BJ (cell line): ENCODE measurements at regions of chr22 and their contacts with region 1.

Region 1: DNA sequence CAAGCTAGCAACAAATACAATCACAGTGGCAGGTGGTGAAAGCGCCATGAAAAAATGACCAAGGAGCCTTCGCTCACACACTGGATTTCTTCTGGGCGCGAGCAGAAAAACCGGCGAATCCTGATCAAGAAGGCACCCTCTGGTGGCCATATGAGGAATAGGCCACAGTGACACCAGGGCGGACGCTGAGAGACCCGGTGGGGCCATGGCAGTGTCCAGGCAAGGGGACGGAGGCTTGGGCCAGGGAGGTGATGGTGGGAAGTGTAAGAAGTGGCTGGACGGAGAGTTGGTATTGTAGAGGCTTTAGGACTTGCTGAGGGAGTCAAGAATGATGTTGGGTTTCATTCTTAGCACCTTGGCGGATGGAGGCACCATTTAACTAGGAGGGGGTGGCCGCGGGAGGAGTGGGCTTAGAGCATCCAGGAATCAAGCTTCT is 16.9 kb upstream of the RAC2 start:
- DNase-seq: no peak
- H3K4me3 ChIP-seq: no peak overlapping the region
- H3K27me3 ChIP-seq: peaks cover 14% of the 10 kb centered on the region
- CTCF ChIP-seq: peak; percentile 96

Region 2: DNA sequence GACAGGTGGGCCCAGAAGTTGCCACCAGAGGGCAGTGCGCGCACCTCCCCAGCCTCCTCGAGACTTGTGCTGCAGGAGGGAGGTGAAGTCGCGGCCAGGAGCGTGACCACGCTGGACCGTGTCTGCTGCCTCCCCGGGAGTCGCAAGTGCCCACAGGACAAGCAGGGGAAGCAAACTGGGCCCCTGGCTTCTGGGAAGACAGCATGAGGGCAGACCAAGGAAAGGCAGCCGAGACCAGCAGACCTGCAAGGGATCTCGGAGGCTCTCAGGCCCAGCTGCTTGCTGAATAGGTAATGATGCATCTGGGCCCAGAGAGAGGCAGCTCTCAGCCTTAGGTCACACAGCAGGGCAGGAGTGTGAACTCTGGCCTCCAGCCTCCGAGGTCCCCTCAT is 94.2 kb before region 1 on chr22:
- CTCF ChIA-PET with region 1: interaction called, 13 read pairs
- POLR2A ChIA-PET with region 1: no interaction called
- DNase-seq: no peak
- H3K4me3 ChIP-seq: no peak overlapping the region
- H3K27me3 ChIP-seq: peaks cover 8% of the 10 kb centered on the region
- CTCF ChIP-seq: peak; percentile 90

Region 3: DNA sequence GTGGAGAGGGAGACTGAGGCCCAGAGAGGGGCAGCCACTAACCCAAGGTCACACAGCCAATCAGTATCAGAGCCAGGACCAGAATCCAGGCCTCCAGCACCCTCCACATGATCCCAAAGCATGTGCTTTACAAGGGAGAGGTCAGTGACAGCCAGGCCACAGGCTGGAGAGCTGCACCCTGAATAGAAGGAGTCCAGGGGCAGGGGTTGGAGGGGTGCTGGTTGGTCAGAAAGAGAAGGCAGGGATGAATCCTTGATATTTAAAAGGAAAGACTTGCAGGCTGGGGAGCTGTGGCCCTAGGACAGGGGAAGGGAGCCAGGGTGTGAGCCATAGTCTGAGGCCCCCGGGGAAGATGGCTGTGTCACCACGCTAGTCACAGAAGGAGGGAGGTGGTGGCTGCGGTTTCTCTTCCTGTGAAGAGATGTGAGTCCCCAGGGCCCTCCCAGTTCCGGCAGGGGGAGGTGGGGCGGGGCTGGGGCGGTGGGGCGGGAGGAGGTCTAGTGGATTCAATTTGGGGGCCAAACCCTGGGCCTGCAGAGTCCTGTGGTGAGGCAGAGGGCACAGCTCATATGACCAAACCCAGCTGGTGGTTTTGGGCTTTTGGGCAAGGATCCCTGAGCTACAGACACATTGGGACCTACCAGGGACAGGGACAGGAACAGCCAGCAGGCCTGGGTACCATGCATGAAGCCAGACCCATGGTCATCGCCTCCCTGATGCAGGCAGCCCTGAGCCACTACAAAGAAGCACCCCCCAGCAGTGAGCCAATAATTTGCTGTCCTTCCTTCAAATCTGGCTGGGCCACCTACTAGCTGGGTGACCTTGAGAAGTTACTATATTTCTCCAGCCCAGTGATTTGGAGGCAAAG is 30.9 kb before region 1 on chr22:
- CTCF ChIA-PET with region 1: interaction called, 46 read pairs
- POLR2A ChIA-PET with region 1: no interaction called
- DNase-seq: peak; percentile 28
- H3K4me3 ChIP-seq: no peak overlapping the region
- H3K27me3 ChIP-seq: no peaks in the 10 kb centered on the region
- CTCF ChIP-seq: no peak

Region 4: DNA sequence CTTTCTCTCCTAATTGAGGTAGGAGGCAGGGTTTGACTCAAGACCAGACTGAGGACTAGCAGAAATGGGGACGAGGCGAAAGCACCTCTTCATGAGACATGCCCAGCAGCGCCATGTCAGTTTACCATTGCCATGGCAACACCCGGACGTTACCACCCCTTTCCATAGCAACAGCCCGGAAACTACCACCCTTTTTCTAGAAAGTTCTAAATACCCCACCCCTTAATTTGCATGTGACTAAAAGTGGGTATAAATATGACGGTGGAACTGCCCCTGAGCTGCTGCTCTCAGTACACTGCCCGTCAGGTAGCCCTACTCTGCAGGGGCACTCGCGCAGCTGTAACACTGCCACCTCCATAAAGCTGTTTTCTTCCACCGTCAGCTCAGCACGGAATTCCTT is 10.9 kb before region 1 on chr22:
- CTCF ChIA-PET with region 1: interaction called, 83 read pairs
- POLR2A ChIA-PET with region 1: no interaction called
- DNase-seq: no peak
- H3K4me3 ChIP-seq: no peak overlapping the region
- H3K27me3 ChIP-seq: peaks cover 1% of the 10 kb centered on the region
- CTCF ChIP-seq: no peak

Region 5: DNA sequence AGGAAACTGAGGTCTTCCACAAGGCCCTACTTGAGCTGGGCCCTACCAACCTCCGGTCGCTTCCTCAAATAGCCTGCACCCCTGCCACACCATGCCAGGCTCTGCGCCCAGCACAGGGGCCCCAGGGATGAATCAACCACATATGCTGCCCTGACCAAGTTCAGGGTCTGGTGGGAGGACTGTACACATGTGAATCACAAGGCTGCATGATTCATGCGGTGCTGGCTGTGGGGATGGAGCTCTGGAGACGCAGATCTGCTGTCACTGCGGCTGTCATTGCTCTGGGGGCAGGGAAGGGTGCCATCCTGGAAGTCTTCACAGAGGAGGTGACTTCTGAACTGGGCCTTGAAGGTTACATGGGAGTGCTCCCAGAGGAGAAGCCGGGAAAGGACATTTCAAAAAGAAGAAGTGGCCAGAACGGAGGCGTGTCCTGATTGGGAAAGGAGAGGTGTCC is 42.9 kb after region 1 on chr22:
- CTCF ChIA-PET with region 1: interaction called, 14 read pairs
- POLR2A ChIA-PET with region 1: no interaction called
- DNase-seq: peak; percentile 58
- H3K4me3 ChIP-seq: no peak overlapping the region
- H3K27me3 ChIP-seq: no peaks in the 10 kb centered on the region
- CTCF ChIP-seq: no peak

Region 6: DNA sequence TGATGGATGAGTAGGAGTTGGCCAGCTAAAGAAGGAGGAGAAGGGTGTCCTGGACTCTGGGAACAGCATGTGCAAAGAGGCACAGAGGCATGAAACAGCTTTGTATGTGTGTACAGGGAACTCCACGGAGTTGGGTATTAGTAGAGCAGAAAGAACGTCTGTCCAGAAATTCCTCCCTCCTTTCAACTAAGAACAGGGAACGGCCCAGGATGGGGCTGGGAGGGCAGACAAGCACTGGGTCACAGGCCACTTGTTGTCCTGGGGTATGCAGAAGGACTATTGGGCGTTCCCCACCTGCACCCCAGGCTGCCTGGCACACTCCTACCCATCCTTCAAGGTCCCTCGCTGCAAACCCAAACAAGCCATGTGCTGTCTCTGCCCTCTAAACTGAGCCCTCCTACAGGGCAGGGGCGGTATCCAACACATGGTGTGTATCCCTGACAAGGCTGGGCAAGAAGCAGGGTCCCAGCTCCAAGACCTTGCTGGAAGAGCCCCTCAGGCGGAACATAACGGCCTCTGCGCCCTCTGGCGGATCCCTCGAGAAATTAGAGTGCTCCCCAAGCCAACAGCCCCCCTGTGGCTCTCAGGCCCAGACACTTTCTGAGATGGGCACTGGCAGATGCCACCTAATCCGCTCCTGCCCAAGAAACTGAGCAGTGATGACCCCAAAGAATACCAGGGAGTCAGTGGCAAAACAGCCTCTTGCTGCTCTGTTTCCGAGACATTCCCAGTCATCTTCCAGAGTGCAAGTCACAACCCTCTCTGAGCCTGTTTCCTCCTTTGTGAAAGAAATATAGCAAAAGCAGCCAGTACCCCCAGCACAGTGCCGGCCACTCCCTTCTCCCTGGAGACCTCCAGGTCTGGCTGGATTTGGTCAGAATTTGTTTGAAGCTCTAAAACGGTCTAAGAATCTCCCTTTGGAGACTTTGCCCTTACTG is 168.0 kb after region 1 on chr22:
- CTCF ChIA-PET with region 1: interaction called, 15 read pairs
- POLR2A ChIA-PET with region 1: no interaction called
- DNase-seq: no peak
- H3K4me3 ChIP-seq: no peak overlapping the region
- H3K27me3 ChIP-seq: peaks cover 16% of the 10 kb centered on the region
- CTCF ChIP-seq: peak; percentile 83

Region 7: DNA sequence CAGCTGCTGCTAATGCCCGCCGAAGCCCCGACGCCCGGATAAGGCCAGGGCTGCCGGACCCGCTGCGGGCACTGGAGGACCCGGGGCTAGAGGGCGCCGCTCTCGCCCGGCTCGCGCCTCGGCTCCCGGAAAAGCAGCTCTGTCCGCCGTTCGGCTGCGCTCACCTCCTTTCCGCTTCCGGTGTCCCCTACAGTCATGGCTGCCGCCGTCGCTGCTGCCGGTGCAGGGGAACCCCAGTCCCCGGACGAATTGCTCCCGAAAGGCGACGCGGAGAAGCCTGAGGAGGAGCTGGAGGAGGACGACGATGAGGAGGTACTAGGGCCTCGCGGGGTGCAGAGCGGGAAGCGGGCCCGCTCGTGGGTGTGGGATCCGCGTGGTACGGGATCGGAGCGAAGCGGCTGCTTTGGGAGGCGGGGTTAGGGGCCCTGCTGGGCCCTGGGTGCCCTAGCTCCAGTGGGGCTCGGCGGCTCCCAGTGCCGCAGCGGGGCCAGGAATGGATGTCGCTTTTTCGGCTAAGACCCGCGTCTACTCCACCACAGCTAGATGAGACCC is 1420.9 kb after region 1 on chr22 and contains the start of gene TOMM22:
- CTCF ChIA-PET with region 1: no interaction called
- POLR2A ChIA-PET with region 1: no interaction called
- DNase-seq: no peak
- H3K4me3 ChIP-seq: peak within 1 kb of the TSS; percentile 91
- H3K27me3 ChIP-seq: no peaks in the 10 kb centered on the region
- CTCF ChIP-seq: peak; percentile 71
- polyA plus RNA-seq, gene TOMM22: 29.6 and 53.3 TPM in 2 replicates